Heart right ventricle (tissue), 16 donors: ENCODE measurements at regions of chr11 and their contacts with region 1.

Region 1: DNA sequence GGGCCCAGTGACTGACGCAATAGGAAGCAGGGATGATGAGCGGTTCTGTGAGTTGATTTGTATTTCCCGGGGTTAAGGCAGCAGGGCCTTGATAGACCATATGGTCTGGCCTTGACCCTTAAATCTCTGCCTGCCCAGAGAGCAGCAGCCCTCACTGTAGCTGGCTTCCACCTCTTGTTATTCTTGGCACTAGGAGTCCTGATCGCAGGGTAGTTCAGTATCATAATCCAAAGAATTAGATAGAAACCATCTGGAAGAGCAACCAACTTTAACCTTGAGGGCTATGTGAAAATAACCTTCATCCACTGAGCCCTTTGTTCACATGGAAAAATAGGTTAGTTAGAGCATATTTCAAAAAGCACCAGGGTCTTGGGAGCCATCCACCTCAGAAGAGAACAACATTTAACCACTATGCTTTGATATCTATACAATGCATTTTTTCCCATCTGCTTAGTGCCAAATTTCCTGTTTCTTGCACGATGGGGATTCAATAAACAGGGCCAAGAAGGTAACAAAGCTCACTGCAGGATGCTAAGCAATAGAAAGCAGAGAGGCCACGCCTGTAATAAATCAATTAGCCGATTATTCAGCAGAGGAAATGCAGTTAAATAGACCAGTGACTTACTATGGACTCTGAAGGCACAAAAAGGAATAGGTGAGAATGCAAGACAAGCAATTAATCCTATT is 761.3 kb downstream of the OPCML start:
- DNase-seq: peak in 1 of 2 donors; percentile 10
- ATAC-seq: peak in 7 of 8 donors; percentile 24 to 69 (median 29)
- H3K4me3 ChIP-seq: no peak overlapping the region
- H3K27ac ChIP-seq: no peak overlapping the region
- H3K4me1 ChIP-seq: peaks cover 0 to 14% (median 0%) of the 10 kb centered on the region in 9 donors
- H3K27me3 ChIP-seq: peaks cover 0 to 2% (median 0%) of the 10 kb centered on the region in 7 donors
- CTCF ChIP-seq: no peak

Region 2: DNA sequence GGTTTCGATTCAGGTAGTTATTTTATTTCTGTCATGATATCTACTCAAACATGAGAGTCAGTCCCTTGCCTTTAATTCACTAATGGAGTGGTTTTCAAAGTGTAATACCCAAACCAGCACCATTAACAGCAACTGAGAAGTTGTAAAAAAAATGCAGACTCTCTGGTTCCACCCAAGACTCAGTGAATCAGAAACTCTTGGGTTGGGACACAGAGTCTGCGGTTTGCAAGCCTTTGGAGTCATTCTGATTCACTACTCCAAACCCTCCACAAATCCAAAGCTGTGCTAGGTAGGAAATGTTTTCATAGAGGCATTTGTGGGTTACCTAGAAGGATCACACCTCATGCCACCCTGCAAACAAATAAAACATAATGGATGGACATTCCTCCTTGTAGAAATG is 1060.5 kb before region 1 on chr11:
- intact Hi-C with region 1: no loop called
- DNase-seq: no peak
- ATAC-seq: no peak
- H3K4me3 ChIP-seq: no peak overlapping the region
- H3K27ac ChIP-seq: no peak overlapping the region
- H3K4me1 ChIP-seq: no peaks in the 10 kb centered on the region
- H3K27me3 ChIP-seq: no peaks in the 10 kb centered on the region
- CTCF ChIP-seq: no peak

Region 3: GRCh38 chr11:132586801-132587200 is 184.2 kb before region 1 on chr11:
- intact Hi-C with region 1: loop called in 1 of 10 experiments (anchors 10 kb)
- DNase-seq: no peak
- ATAC-seq: no peak
- H3K4me3 ChIP-seq: no peak overlapping the region
- H3K27ac ChIP-seq: no peak overlapping the region
- H3K4me1 ChIP-seq: peaks cover 0 to 20% (median 0%) of the 10 kb centered on the region in 9 donors
- H3K27me3 ChIP-seq: peaks cover 0 to 2% (median 0%) of the 10 kb centered on the region in 7 donors
- CTCF ChIP-seq: no peak

Region 4: GRCh38 chr11:132831272-132831671 is 60.3 kb after region 1 on chr11:
- intact Hi-C with region 1: no loop called
- DNase-seq: no peak
- ATAC-seq: no peak
- H3K4me3 ChIP-seq: no peak overlapping the region
- H3K27ac ChIP-seq: no peak overlapping the region
- H3K4me1 ChIP-seq: no peaks in the 10 kb centered on the region
- H3K27me3 ChIP-seq: peaks cover 0 to 3% (median 0%) of the 10 kb centered on the region in 7 donors
- CTCF ChIP-seq: no peak